ENCODE measurements at regions of chr1 and their contacts with region 1.

Region 1: DNA sequence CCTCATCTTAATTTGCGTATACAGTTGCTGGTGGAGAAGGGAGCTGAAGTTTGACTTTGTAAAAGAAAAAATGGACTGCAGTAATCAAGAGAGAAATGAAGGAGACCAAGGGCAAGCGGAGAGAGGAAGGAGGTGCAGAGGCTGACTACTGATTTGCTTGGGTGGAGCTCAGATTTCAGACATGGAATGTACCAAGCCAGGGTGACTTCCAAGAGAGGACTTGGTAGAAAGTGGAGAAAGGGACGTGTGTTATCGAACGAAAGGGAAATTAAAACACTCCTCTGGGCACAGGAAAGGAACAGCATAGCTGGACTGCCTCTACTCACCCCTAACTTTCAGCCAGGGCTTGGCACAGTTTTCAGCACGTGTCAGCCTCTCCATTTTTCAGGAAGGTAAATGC is 15.1 kb upstream of the HEATR1 start:
- DNase-seq: no peak
- ATAC-seq: no peak
- H3K4me3 ChIP-seq: no peak overlapping the region
- H3K27ac ChIP-seq: no peak overlapping the region
- H3K4me1 ChIP-seq: no peaks in the 10 kb centered on the region
- H3K27me3 ChIP-seq: no peaks in the 10 kb centered on the region
- CTCF ChIP-seq: no peak
- POLR2A ChIP-seq: no peak
- RAD21 ChIP-seq: no peak

Region 2: GRCh38 chr1:236741753-236742152 is 122.4 kb after region 1 on chr1:
- CTCF ChIA-PET with region 1: no interaction called
- POLR2A ChIA-PET with region 1: no interaction called
- dilution Hi-C with region 1: no loop called
- in situ Hi-C with region 1: no loop called
- intact Hi-C with region 1: no loop called
- DNase-seq: no peak
- ATAC-seq: no peak
- H3K4me3 ChIP-seq: no peak overlapping the region
- H3K27ac ChIP-seq: no peak overlapping the region
- H3K4me1 ChIP-seq: no peaks in the 10 kb centered on the region
- H3K27me3 ChIP-seq: no peaks in the 10 kb centered on the region
- CTCF ChIP-seq: no peak
- POLR2A ChIP-seq: no peak
- RAD21 ChIP-seq: no peak

Region 3: GRCh38 chr1:236759252-236759859 is 140.0 kb after region 1 on chr1:
- CTCF ChIA-PET with region 1: no interaction called
- POLR2A ChIA-PET with region 1: no interaction called
- dilution Hi-C with region 1: no loop called
- in situ Hi-C with region 1: no loop called
- intact Hi-C with region 1: loop called (anchors 10 kb)
- DNase-seq: peak; percentile 42
- ATAC-seq: peak; percentile 72
- H3K4me3 ChIP-seq: no peak overlapping the region
- H3K27ac ChIP-seq: no peak overlapping the region
- H3K4me1 ChIP-seq: no peaks in the 10 kb centered on the region
- H3K27me3 ChIP-seq: no peaks in the 10 kb centered on the region
- CTCF ChIP-seq: peak; percentile 60
- POLR2A ChIP-seq: no peak
- RAD21 ChIP-seq: peak; percentile 53